MCF 10A (cell line): ENCODE measurements at regions of chr15 and their contacts with region 1.

Region 1: GRCh38 chr15:31488426-31489204 is 162.0 kb downstream of the KLF13 start:
- DNase-seq: peak; percentile 88
- H3K4me3 Mint-ChIP-seq: no peak overlapping the region
- H3K27ac Mint-ChIP-seq: peak overlapping the region; percentile 57
- H3K4me1 Mint-ChIP-seq: peaks cover 23% of the 10 kb centered on the region
- H3K27me3 Mint-ChIP-seq: no peaks in the 10 kb centered on the region
- CTCF ChIP-seq: peak; percentile 90

Region 2: GRCh38 chr15:30670056-30670455 is 818.6 kb before region 1 on chr15:
- CTCF ChIA-PET with region 1: interaction called, 4 read pairs
- POLR2A ChIA-PET with region 1: no interaction called
- intact Hi-C with region 1: loop called (anchors 10 kb)
- DNase-seq: no peak
- H3K4me3 Mint-ChIP-seq: no peak overlapping the region
- H3K27ac Mint-ChIP-seq: no peak overlapping the region
- H3K4me1 Mint-ChIP-seq: no peaks in the 10 kb centered on the region
- H3K27me3 Mint-ChIP-seq: no peaks in the 10 kb centered on the region
- CTCF ChIP-seq: no peak

Region 3: DNA sequence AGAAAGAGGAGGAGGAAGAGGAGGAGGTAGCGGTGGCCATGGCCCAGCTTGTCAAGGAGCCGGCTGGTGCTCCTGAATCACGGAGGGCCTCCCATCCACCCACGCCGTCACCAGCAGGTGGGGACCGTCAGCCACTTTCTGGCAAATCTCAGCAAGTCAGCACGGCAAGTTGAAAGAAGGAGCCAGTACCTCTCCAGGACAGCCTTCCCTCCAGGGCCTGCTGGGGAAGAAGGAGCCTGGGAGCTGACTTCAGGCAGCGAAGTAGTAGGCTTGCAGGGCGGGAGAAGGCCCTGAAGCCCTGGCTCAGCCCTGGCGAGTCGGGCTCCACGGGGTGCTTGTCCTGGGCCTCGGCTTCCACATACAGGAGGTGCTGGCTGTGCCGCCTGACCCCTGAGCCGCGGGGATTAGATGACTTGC is 287.9 kb before region 1 on chr15:
- CTCF ChIA-PET with region 1: interaction called, 20 read pairs
- POLR2A ChIA-PET with region 1: no interaction called
- intact Hi-C with region 1: loop called (anchors 1 kb)
- DNase-seq: peak; percentile 71
- H3K4me3 Mint-ChIP-seq: no peak overlapping the region
- H3K27ac Mint-ChIP-seq: no peak overlapping the region
- H3K4me1 Mint-ChIP-seq: peaks cover 6% of the 10 kb centered on the region
- H3K27me3 Mint-ChIP-seq: peaks cover 11% of the 10 kb centered on the region
- CTCF ChIP-seq: peak; percentile 41

Region 4: DNA sequence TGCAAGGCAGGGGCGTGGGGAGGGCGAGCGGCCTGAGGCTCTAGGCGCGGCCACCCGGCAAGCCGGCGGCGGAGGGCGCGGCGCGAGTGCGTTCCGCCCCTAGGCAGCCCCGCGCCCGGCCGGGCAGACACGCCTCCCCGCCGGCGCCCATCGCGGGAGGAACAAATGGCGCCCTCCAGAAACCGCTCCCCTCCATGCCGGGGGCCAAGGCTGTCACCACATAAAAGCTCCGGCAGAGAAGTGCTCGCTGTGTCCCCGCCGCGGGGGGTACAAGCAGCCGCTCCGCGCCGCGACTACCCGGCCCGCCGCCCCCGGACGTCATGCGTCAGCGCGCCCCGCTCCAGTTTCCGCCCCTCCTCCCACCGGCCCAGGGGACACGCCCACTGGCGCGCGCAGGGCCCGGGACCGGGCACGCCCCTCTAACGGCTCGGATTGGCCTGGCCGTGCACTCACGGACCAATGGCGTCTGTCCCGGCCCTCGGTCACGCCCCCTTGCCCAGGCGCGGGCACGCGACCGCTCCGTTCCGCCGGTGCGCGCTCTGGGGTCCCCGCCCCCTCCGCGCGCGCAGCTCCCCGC is 162.4 kb before region 1 on chr15:
- CTCF ChIA-PET with region 1: interaction called, 17 read pairs
- POLR2A ChIA-PET with region 1: interaction called, 6 read pairs
- intact Hi-C with region 1: loop called (anchors 1 kb)
- DNase-seq: peak; percentile 97
- H3K4me3 Mint-ChIP-seq: peak overlapping the region; percentile 95
- H3K27ac Mint-ChIP-seq: no peak overlapping the region
- H3K4me1 Mint-ChIP-seq: peaks cover 19% of the 10 kb centered on the region
- H3K27me3 Mint-ChIP-seq: no peaks in the 10 kb centered on the region
- CTCF ChIP-seq: no peak

Region 5: GRCh38 chr15:31396881-31397560 is 91.6 kb before region 1 on chr15:
- CTCF ChIA-PET with region 1: interaction called, 14 read pairs
- POLR2A ChIA-PET with region 1: interaction called, 6 read pairs
- intact Hi-C with region 1: no loop called
- DNase-seq: peak; percentile 96
- H3K4me3 Mint-ChIP-seq: no peak overlapping the region
- H3K27ac Mint-ChIP-seq: peak overlapping the region; percentile 87
- H3K4me1 Mint-ChIP-seq: peaks cover 44% of the 10 kb centered on the region
- H3K27me3 Mint-ChIP-seq: no peaks in the 10 kb centered on the region
- CTCF ChIP-seq: no peak

Region 6: DNA sequence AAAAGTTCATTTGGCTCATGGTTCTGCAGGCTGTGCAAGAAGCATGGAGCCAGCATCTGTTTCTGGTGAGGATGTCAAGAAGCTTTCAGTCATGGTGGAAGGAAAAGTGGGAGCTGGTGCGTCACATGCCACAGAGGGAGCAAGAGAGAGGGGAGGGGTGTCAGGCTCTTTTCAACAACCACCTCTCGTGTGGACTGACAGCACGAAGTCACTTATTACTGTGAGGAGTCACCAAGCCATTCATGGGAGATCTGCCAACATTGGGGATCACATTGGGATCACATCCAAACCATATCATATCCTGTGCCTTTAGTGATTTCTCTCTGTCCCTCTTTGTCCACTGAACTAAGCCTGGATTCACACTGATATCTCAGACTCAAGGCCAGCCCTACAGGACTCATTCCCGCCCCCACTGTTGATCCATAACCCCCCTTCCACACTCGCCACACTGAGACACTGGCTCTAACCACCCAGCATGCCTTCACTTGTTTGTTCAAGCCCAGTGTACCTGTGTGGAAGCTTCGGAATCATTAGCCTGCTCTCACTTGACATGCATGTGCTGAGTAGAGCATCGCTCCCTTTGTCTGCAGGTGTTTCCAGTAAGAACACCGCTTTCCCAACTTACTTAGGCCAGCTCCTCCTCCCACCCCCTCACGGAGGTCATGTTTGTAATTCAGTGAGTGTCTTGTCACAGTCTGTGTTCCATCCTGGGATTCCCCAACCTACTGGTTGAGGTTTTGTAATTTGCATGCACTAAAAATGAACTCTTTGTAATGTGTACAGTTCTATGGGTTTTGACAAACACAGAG is 29.8 kb before region 1 on chr15:
- CTCF ChIA-PET with region 1: interaction called, 33 read pairs
- POLR2A ChIA-PET with region 1: interaction called, 3 read pairs
- intact Hi-C with region 1: no loop called
- DNase-seq: peak; percentile 71
- H3K4me3 Mint-ChIP-seq: peak overlapping the region; percentile 1
- H3K27ac Mint-ChIP-seq: peak overlapping the region; percentile 57
- H3K4me1 Mint-ChIP-seq: peaks cover 24% of the 10 kb centered on the region
- H3K27me3 Mint-ChIP-seq: no peaks in the 10 kb centered on the region
- CTCF ChIP-seq: no peak

Region 7: GRCh38 chr15:31499953-31500765 is 11.5 kb after region 1 on chr15:
- CTCF ChIA-PET with region 1: interaction called, 71 read pairs
- POLR2A ChIA-PET with region 1: interaction called, 3 read pairs
- intact Hi-C with region 1: no loop called
- DNase-seq: no peak
- H3K4me3 Mint-ChIP-seq: no peak overlapping the region
- H3K27ac Mint-ChIP-seq: no peak overlapping the region
- H3K4me1 Mint-ChIP-seq: peaks cover 4% of the 10 kb centered on the region
- H3K27me3 Mint-ChIP-seq: no peaks in the 10 kb centered on the region
- CTCF ChIP-seq: no peak

Region 8: GRCh38 chr15:31824024-31824423 is 335.4 kb after region 1 on chr15:
- CTCF ChIA-PET with region 1: no interaction called
- POLR2A ChIA-PET with region 1: no interaction called
- intact Hi-C with region 1: no loop called
- DNase-seq: no peak
- H3K4me3 Mint-ChIP-seq: no peak overlapping the region
- H3K27ac Mint-ChIP-seq: no peak overlapping the region
- H3K4me1 Mint-ChIP-seq: no peaks in the 10 kb centered on the region
- H3K27me3 Mint-ChIP-seq: no peaks in the 10 kb centered on the region
- CTCF ChIP-seq: no peak

Region 9: GRCh38 chr15:33111041-33111451 is 1622.4 kb after region 1 on chr15:
- CTCF ChIA-PET with region 1: no interaction called
- POLR2A ChIA-PET with region 1: no interaction called
- intact Hi-C with region 1: no loop called
- DNase-seq: no peak
- H3K4me3 Mint-ChIP-seq: no peak overlapping the region
- H3K27ac Mint-ChIP-seq: no peak overlapping the region
- H3K4me1 Mint-ChIP-seq: peaks cover 9% of the 10 kb centered on the region
- H3K27me3 Mint-ChIP-seq: peaks cover 11% of the 10 kb centered on the region
- CTCF ChIP-seq: no peak